ENCODE measurements at regions of chr1 and their contacts with region 1.

Region 1: DNA sequence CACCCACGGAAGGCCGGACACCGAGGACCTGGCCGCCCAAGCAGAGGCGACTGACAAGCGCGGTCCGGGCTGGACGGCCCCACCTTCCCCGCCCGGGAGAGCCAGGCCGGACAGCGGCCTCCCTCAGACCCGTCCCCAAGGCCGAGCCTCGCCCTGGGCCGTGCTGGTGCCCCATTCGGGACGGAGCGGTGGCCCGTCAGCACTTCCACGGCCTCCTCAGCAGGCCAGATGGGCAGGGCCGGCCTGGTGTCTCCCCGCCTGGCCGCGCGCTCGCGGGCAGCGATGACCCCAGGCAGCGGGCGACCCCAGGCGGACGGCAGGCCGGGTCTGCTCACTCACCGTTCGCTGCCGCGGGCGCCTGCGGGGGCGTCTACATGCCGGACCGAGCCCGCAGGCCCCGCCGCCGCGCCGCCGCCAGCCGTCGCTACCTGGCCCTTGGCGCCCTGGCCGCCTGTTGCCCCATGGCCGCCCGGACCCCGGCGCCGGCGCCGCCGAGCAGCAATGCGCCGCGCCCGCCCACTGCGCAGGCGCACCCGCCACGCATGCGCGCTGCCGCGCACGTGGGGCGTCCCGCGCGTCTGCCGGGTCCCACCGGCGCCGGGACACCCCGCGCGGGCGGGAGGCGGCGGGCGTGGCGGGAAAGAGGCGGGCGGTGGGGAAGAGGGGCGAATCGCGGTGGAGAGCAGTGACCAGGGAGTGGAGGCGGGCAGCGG is at the start of gene NADK:
- DNase-seq: peak; percentile 90
- ATAC-seq: peak; percentile 29
- H3K4me3 Mint-ChIP-seq: peak within 1 kb of the TSS; percentile 85
- H3K27ac Mint-ChIP-seq: peak within 1 kb of the TSS; percentile 95
- H3K4me1 Mint-ChIP-seq: peaks cover 76% of the 10 kb centered on the region
- H3K27me3 Mint-ChIP-seq: no peaks in the 10 kb centered on the region
- CTCF ChIP-seq: no peak
- total RNA-seq, gene NADK: 106 and 122 TPM in 2 replicates

Region 2: GRCh38 chr1:1237874-1238701 is 540.0 kb before region 1 on chr1:
- CTCF ChIA-PET with region 1: no interaction called
- POLR2A ChIA-PET with region 1: no interaction called
- intact Hi-C with region 1: no loop called
- DNase-seq: no peak
- ATAC-seq: peak; percentile 66
- H3K4me3 Mint-ChIP-seq: peak overlapping the region; percentile 32
- H3K27ac Mint-ChIP-seq: no peak overlapping the region
- H3K4me1 Mint-ChIP-seq: peaks cover 28% of the 10 kb centered on the region
- H3K27me3 Mint-ChIP-seq: no peaks in the 10 kb centered on the region
- CTCF ChIP-seq: no peak

Region 3: GRCh38 chr1:1687846-1688245 is 90.3 kb before region 1 on chr1:
- CTCF ChIA-PET with region 1: no interaction called
- POLR2A ChIA-PET with region 1: no interaction called
- intact Hi-C with region 1: no loop called
- DNase-seq: no peak
- ATAC-seq: no peak
- H3K4me3 Mint-ChIP-seq: no peak overlapping the region
- H3K27ac Mint-ChIP-seq: no peak overlapping the region
- H3K4me1 Mint-ChIP-seq: peaks cover 7% of the 10 kb centered on the region
- H3K27me3 Mint-ChIP-seq: no peaks in the 10 kb centered on the region
- CTCF ChIP-seq: no peak

Region 4: GRCh38 chr1:1748686-1749321 is 29.3 kb before region 1 on chr1:
- CTCF ChIA-PET with region 1: no interaction called
- POLR2A ChIA-PET with region 1: interaction called, 10 read pairs
- intact Hi-C with region 1: no loop called
- DNase-seq: no peak
- ATAC-seq: no peak
- H3K4me3 Mint-ChIP-seq: no peak overlapping the region
- H3K27ac Mint-ChIP-seq: peak overlapping the region; percentile 24
- H3K4me1 Mint-ChIP-seq: no peaks in the 10 kb centered on the region
- H3K27me3 Mint-ChIP-seq: no peaks in the 10 kb centered on the region
- CTCF ChIP-seq: no peak

Region 5: DNA sequence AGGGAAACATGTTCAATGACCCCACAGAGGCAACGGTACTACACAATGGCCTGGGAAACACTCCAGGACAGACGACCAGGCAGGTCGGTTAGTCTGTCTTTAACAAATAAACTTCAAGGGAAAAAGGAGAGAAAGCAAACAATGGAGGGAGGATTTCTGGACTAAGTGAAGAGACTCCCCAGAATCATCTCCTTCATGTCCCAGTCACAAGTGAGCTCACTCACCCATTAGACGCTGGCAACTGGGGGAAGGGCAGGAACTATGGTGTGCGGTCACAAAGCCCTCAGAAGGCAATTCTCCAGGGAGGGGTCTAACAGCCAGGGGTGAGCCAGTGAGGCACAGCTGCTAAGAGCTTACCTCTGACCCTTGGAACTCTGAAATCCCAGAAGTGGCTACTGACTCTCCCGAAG is 55.8 kb after region 1 on chr1:
- CTCF ChIA-PET with region 1: no interaction called
- POLR2A ChIA-PET with region 1: interaction called, 7 read pairs
- intact Hi-C with region 1: loop called (anchors 5 kb)
- DNase-seq: peak; percentile 48
- ATAC-seq: peak; percentile 92
- H3K4me3 Mint-ChIP-seq: peak overlapping the region; percentile 74
- H3K27ac Mint-ChIP-seq: peak overlapping the region; percentile 83
- H3K4me1 Mint-ChIP-seq: peaks cover 57% of the 10 kb centered on the region
- H3K27me3 Mint-ChIP-seq: no peaks in the 10 kb centered on the region
- CTCF ChIP-seq: no peak

Region 6: GRCh38 chr1:1890506-1891348 is 112.6 kb after region 1 on chr1 and contains the start of gene GNB1:
- CTCF ChIA-PET with region 1: no interaction called
- POLR2A ChIA-PET with region 1: interaction called, 7 read pairs
- intact Hi-C with region 1: loop called (anchors 1 kb)
- DNase-seq: peak; percentile 96
- ATAC-seq: peak; percentile 59
- H3K4me3 Mint-ChIP-seq: peak within 1 kb of the TSS; percentile 86
- H3K27ac Mint-ChIP-seq: peak within 1 kb of the TSS; percentile 95
- H3K4me1 Mint-ChIP-seq: peaks cover 66% of the 10 kb centered on the region
- H3K27me3 Mint-ChIP-seq: no peaks in the 10 kb centered on the region
- CTCF ChIP-seq: no peak
- total RNA-seq, gene GNB1: 266 and 302 TPM in 2 replicates

Measured in activated B cell treated with CpG ODN at 0.5 μM for 24 hours (primary cell).